Upper lobe of right lung (tissue), 1 donor: ENCODE measurements at regions of chr12 and their contacts with region 1.

Region 1: DNA sequence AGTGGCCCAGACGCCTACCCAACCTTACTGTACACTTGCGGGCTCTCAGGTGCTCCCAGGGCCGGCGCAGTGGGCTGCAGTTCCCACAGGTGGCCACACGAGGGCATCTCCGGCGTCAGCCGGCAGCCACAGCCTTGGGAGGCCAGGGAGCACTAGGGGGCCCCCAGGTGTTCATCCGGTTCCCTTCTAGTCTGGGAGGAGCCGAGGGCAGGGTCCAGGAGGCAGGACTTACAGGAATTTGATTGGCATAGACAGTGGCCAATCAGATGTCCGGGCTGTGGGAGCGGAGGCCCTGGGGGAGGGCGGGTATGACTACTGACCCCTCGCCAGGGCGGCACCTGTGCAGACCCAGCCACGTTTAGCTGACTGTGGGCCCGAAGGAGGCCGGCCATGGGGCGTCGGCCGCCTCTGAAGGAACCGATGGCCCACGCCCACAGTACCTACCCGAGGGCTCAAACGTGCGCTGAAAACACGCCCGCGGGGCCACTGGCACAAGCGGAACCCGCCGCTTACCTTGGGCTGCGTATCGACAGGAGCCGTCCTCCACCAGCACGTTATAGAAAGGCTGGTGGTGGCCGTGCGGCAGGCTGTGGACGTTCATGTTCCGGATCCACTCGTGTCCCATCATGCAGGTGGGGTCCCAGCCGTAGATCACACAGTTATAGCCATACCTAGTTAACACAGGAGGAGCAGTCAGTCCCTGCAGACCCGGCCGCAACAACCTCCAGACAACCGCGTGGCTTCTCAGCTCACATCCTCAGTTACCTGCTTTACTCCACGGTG is 34.8 kb downstream of the FBXO21 start:
- DNase-seq: peak; percentile 85
- ATAC-seq: peak; percentile 93
- H3K4me3 ChIP-seq: no peak overlapping the region
- H3K27ac ChIP-seq: no peak overlapping the region
- H3K4me1 ChIP-seq: peaks cover 4% of the 10 kb centered on the region
- H3K27me3 ChIP-seq: no peaks in the 10 kb centered on the region
- CTCF ChIP-seq: peak; percentile 79

Region 2: DNA sequence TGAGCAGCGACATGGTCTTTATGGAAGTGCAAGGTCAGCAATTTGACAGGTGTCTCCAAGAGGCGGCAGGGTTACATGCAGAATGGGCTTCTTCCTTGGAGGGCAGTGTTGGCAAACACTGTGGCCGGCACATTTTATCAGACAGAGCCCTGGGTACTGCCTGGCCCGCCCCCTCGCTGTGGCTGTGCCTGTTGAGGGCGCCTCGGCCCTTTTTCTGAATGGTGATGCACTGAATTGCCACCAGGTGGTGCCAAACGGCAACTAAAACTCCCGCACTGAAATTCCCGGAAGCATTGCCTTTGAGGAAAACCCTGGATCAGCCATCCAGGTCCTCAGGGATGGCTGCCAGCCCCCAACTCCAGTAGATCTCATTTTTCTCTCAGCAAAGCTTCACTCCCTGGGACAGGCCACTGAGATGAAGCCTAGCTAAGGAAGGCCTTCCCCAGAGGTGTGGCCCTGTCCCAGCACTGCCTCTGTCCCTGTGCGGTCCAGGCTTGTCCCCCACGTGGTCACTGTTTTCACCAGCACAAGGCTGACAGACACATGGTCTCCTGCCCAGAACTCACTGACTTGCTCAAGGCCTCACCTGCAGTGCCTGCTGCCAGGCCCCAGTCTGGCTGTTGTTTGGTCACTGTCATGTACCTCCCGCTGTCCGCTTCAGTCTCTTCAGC is 129.9 kb before region 1 on chr12:
- intact Hi-C with region 1: loop called (anchors 10 kb)
- DNase-seq: no peak
- ATAC-seq: peak; percentile 85
- H3K4me3 ChIP-seq: no peak overlapping the region
- H3K27ac ChIP-seq: no peak overlapping the region
- H3K4me1 ChIP-seq: no peaks in the 10 kb centered on the region
- H3K27me3 ChIP-seq: no peaks in the 10 kb centered on the region
- CTCF ChIP-seq: peak; percentile 87

Region 3: DNA sequence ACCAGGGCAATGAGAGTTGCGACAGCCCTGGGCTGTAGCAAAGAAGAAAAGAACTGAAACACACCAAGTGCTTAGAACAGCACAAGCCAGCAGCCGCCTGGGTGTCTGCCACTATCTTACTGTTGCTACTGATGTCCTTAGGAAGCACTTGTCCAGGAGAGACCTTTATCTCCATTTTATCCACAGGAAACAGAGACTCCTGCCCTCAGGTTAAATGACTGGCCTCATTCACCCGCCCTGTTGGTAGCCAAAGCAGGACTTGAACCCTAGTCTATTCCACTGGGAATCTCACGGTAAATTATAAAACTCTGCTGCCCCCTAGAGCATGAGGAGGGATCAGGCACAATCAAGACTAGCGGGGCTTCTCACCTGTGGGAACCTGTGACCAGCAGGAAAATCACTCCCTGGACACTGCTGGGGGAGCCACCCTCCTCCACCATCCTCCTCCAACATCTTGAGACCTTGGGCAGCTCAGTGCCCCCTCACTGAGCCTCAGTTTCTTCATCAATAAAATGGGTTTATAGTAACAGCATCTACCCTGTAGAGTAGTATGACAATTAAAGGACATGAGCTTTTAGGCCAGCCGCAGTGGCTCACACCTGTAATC is 35.8 kb before region 1 on chr12:
- intact Hi-C with region 1: no loop called
- DNase-seq: peak; percentile 27
- ATAC-seq: peak; percentile 70
- H3K4me3 ChIP-seq: no peak overlapping the region
- H3K27ac ChIP-seq: no peak overlapping the region
- H3K4me1 ChIP-seq: peaks cover 17% of the 10 kb centered on the region
- H3K27me3 ChIP-seq: no peaks in the 10 kb centered on the region
- CTCF ChIP-seq: peak; percentile 71

Region 4: DNA sequence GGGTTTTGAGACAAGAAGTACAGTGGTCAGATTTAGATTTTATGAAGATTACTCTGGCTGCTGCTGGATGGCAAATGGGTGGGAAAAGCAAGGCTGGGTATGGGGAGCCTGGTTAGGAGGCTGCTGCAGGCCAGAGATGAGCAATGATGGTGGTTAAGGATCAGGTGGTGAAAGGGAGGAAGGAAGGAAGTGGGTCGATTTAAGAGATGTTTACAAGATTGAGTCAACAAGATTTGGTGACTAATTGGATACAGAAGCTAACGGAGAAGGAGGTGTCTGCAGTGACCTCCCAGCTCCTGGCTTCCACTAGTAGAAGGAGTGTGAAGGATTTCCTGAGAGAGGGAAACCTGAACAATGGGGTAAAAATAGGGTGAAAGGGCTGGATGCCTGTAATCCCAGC is 187.2 kb after region 1 on chr12:
- intact Hi-C with region 1: no loop called
- DNase-seq: no peak
- ATAC-seq: no peak
- H3K4me3 ChIP-seq: no peak overlapping the region
- H3K27ac ChIP-seq: no peak overlapping the region
- H3K4me1 ChIP-seq: no peaks in the 10 kb centered on the region
- H3K27me3 ChIP-seq: peaks cover 4% of the 10 kb centered on the region
- CTCF ChIP-seq: no peak